CD4-positive, alpha-beta T cell (primary cell): ENCODE measurements at regions of chr14 and their contacts with region 1.

Region 1: DNA sequence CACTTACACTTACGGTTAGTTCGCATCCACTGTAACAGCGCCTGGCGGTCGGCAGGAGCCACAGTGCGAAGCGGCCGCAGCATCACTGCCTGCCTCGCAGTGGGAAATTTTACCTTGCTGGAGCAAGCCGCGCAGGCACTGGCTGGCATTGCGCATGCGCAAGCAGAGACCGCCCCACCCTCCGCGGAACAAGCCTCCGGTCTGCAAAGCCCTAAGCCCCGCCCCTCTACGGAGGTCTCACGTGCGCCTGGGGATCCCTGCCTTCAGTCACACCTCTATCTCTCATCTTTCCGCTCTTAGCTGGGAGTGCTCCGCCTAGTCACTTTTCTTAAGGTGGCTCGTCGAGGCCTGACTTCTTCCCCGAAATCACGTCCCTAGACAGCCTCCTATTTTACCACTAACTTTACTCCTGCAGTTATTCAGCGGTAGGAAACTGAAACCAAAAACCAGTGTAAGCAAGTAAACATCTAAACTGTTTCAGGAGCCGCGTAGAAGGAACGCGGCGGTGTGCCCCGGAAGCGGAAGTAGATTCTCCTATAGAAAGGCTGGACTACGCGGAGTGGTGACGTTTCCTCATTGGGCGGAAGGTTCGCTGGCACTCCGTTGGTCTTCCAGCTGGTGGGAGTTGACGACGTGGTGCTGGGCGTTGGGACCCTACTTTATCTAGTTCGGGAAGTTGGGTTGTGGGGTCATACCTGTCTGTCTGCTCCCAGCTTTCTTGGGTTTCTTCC is at the start of gene SRP54:
- DNase-seq: peak; percentile 98 to 100 (median 100)
- ATAC-seq: peak; percentile 93
- H3K4me3 ChIP-seq: peak within 1 kb of the TSS; percentile 81
- H3K4me3 Mint-ChIP-seq: no peak within 1 kb of the TSS
- H3K27ac ChIP-seq: peak within 1 kb of the TSS; percentile 96 to 99
- H3K27ac Mint-ChIP-seq: no peak within 1 kb of the TSS
- H3K4me1 ChIP-seq: peaks cover 38% of the 10 kb centered on the region
- H3K4me1 Mint-ChIP-seq: peaks cover 14% of the 10 kb centered on the region
- H3K27me3 ChIP-seq: no peaks in the 10 kb centered on the region
- H3K27me3 Mint-ChIP-seq: no peaks in the 10 kb centered on the region
- CTCF ChIP-seq: no peak
- total RNA-seq, gene SRP54: 30.3 to 32.7 TPM

Region 2: DNA sequence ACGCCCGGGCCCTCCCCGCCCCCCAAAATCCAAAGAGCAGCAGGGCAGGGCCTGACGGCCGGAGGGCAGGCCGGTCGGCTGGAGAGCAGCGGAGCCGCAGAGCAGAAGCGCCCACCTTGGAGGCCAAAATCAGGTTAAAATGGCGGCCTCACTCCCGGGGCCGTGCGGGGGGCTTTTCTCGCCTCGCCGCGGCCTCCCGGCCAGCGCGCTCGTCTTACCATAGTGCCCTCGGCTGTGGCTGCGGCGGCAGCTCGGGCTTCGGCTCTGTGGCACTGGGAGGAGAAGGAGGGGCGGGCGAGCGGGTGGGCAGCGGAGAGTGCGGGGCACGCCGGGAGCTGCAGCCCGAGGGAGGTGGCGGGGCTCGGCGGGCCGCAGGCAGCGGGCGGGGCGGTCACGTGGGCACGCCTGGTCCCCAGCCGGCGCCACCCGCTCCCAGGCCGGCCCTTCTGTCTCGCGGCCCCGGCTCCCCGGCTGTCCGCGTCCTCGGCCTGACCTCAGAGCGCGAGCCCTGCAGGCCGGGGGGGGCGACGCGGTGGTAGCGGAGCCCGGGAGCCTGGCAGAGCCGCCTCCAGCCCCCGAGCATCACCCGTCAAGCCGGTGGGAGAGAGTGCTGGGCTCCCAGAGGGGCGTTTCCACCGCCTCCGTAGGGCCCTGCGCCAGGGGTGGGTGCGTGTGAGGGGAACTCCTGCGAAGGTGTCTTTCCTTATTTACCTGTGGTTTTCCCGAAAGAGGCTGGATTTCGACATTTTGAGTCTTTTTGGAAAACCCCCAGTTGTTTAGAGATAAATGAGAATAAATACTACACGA is 268.1 kb before region 1 on chr14 and contains the start of gene CFL2:
- CTCF ChIA-PET with region 1: no interaction called
- POLR2A ChIA-PET with region 1: interaction called, 4 read pairs
- intact Hi-C with region 1: loop called in 1 of 2 experiments (anchors 5 kb)
- DNase-seq: peak; percentile 34 to 92 (median 61)
- ATAC-seq: peak; percentile 87
- H3K4me3 ChIP-seq: peak within 1 kb of the TSS; percentile 78
- H3K4me3 Mint-ChIP-seq: peak within 1 kb of the TSS; percentile 94
- H3K27ac ChIP-seq: peak within 1 kb of the TSS; percentile 31 to 52
- H3K27ac Mint-ChIP-seq: peak within 1 kb of the TSS; percentile 90
- H3K4me1 ChIP-seq: peaks cover 9% of the 10 kb centered on the region
- H3K4me1 Mint-ChIP-seq: peaks cover 31% of the 10 kb centered on the region
- H3K27me3 ChIP-seq: no peaks in the 10 kb centered on the region
- H3K27me3 Mint-ChIP-seq: no peaks in the 10 kb centered on the region
- CTCF ChIP-seq: no peak
- total RNA-seq, gene CFL2: 36.4 to 37.9 TPM

Region 3: GRCh38 chr14:34875031-34875922 is 107.3 kb before region 1 on chr14 and contains the start of gene BAZ1A:
- CTCF ChIA-PET with region 1: interaction called, 7 read pairs
- POLR2A ChIA-PET with region 1: interaction called, 172 read pairs
- intact Hi-C with region 1: loop called (anchors 1 to 2 kb)
- DNase-seq: peak; percentile 1 to 82 (median 18)
- ATAC-seq: peak; percentile 9
- H3K4me3 ChIP-seq: peak within 1 kb of the TSS; percentile 96
- H3K4me3 Mint-ChIP-seq: peak within 1 kb of the TSS; percentile 100
- H3K27ac ChIP-seq: peak within 1 kb of the TSS; percentile 100
- H3K27ac Mint-ChIP-seq: peak within 1 kb of the TSS; percentile 97
- H3K4me1 ChIP-seq: peaks cover 19% of the 10 kb centered on the region
- H3K4me1 Mint-ChIP-seq: peaks cover 40% of the 10 kb centered on the region
- H3K27me3 ChIP-seq: no peaks in the 10 kb centered on the region
- H3K27me3 Mint-ChIP-seq: no peaks in the 10 kb centered on the region
- CTCF ChIP-seq: no peak
- total RNA-seq, gene BAZ1A: 46.5 to 52.3 TPM

Region 4: GRCh38 chr14:34971381-34971780 is 11.2 kb before region 1 on chr14:
- CTCF ChIA-PET with region 1: interaction called, 3 read pairs
- POLR2A ChIA-PET with region 1: interaction called, 10 read pairs
- intact Hi-C with region 1: no loop called
- DNase-seq: no peak
- ATAC-seq: no peak
- H3K4me3 ChIP-seq: no peak overlapping the region
- H3K4me3 Mint-ChIP-seq: no peak overlapping the region
- H3K27ac ChIP-seq: no peak overlapping the region
- H3K27ac Mint-ChIP-seq: no peak overlapping the region
- H3K4me1 ChIP-seq: peaks cover 4% of the 10 kb centered on the region
- H3K4me1 Mint-ChIP-seq: peaks cover 20% of the 10 kb centered on the region
- H3K27me3 ChIP-seq: no peaks in the 10 kb centered on the region
- H3K27me3 Mint-ChIP-seq: no peaks in the 10 kb centered on the region
- CTCF ChIP-seq: no peak

Region 5: DNA sequence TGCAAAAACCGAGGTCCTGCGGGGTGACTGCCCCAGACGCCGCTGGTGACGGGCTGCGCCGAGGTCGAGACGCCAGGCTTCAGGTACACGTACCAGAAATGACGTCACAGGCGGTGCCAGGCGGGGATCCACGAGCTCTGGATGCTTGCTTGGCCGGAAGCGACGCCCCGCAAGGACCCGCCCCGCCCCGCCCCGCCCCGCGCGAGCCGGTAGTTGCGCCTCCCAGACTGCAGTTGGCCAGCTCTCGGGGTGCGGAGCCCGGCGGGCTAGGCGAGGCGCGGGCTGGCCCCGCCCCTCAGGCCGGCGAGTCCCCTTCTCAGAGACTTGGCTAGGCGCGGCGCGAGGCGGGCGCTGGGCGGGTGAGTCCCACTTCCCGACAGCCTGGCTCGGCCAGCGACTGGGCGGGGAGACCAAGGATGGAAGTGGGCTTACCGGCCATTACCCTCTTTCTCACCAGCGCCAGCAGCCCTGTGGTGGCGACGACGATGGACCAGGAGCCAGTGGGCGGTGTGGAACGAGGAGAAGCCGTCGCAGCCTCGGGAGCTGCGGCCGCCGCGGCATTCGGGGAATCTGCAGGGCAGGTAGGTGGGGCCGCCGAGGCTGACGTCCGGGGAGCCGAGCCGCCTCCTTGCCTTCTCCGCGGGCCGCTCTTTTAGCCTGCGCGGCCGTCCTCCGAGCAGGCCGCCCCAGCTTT is 63.6 kb after region 1 on chr14 and contains the start of gene FAM177A1:
- CTCF ChIA-PET with region 1: interaction called, 8 read pairs
- POLR2A ChIA-PET with region 1: interaction called, 131 read pairs
- intact Hi-C with region 1: loop called (anchors 1 kb)
- DNase-seq: peak; percentile 94 to 100 (median 98)
- ATAC-seq: peak; percentile 83
- H3K4me3 ChIP-seq: peak within 1 kb of the TSS; percentile 68
- H3K4me3 Mint-ChIP-seq: peak within 1 kb of the TSS; percentile 91
- H3K27ac ChIP-seq: peak within 1 kb of the TSS; percentile 96 to 97
- H3K27ac Mint-ChIP-seq: peak within 1 kb of the TSS; percentile 94
- H3K4me1 ChIP-seq: peaks cover 11% of the 10 kb centered on the region
- H3K4me1 Mint-ChIP-seq: peaks cover 36% of the 10 kb centered on the region
- H3K27me3 ChIP-seq: no peaks in the 10 kb centered on the region
- H3K27me3 Mint-ChIP-seq: no peaks in the 10 kb centered on the region
- CTCF ChIP-seq: no peak
- total RNA-seq, gene FAM177A1: 172 to 186 TPM

Region 6: DNA sequence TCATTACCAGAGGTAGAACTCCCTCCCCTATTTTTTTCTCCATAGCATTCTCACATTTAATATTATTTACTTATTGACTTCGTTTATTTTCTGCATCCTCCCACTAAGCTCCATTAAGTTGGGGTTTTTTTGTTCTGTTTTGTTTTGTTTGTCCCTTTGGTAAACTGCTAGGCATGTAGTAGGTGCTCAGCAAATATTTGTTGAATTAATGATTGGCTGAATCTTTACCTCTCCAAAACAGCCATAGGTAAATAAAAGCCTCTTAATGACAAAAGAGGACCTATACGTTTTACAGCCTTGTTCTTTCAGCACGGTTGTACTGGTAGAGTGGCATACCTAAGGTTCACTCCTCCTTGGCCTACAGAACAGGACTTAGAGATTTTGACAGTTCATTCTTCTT is 191.8 kb after region 1 on chr14:
- CTCF ChIA-PET with region 1: no interaction called
- POLR2A ChIA-PET with region 1: no interaction called
- intact Hi-C with region 1: no loop called
- DNase-seq: no peak
- ATAC-seq: no peak
- H3K4me3 ChIP-seq: no peak overlapping the region
- H3K4me3 Mint-ChIP-seq: no peak overlapping the region
- H3K27ac ChIP-seq: no peak overlapping the region
- H3K27ac Mint-ChIP-seq: no peak overlapping the region
- H3K4me1 ChIP-seq: no peaks in the 10 kb centered on the region
- H3K4me1 Mint-ChIP-seq: peaks cover 18% of the 10 kb centered on the region
- H3K27me3 ChIP-seq: no peaks in the 10 kb centered on the region
- H3K27me3 Mint-ChIP-seq: no peaks in the 10 kb centered on the region
- CTCF ChIP-seq: no peak

Region 7: GRCh38 chr14:35292051-35292769 is 309.6 kb after region 1 on chr14 and contains the start of gene PSMA6:
- CTCF ChIA-PET with region 1: no interaction called
- POLR2A ChIA-PET with region 1: interaction called, 17 read pairs
- intact Hi-C with region 1: loop called in 1 of 2 experiments (anchors 2 kb)
- DNase-seq: peak; percentile 97 to 100 (median 99)
- ATAC-seq: peak; percentile 96
- H3K4me3 ChIP-seq: peak within 1 kb of the TSS; percentile 78
- H3K4me3 Mint-ChIP-seq: peak within 1 kb of the TSS; percentile 98
- H3K27ac ChIP-seq: peak within 1 kb of the TSS; percentile 80 to 86
- H3K27ac Mint-ChIP-seq: peak within 1 kb of the TSS; percentile 95
- H3K4me1 ChIP-seq: peaks cover 38% of the 10 kb centered on the region
- H3K4me1 Mint-ChIP-seq: peaks cover 50% of the 10 kb centered on the region
- H3K27me3 ChIP-seq: no peaks in the 10 kb centered on the region
- H3K27me3 Mint-ChIP-seq: no peaks in the 10 kb centered on the region
- CTCF ChIP-seq: no peak
- total RNA-seq, gene PSMA6: 80.8 TPM

Region 8: DNA sequence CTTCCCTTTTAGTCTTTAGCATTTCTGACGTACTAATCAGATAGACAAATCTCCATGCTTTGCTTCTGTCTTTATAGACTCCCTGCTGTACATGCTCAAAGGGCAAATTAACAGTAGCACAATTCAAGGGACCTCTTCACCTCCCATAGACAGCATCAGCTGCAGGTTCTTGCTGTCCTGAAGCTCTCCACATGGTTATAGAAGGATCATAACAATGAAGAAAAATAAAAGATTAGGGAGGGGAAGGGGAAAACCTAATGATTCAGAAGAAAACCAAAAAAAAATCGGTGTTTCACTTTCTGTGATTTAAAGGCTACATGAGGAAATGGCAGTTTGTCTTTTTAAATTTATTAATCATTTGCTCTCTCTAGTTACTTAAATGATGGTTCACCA is 1038.4 kb after region 1 on chr14:
- CTCF ChIA-PET with region 1: no interaction called
- POLR2A ChIA-PET with region 1: no interaction called
- intact Hi-C with region 1: no loop called
- DNase-seq: no peak
- ATAC-seq: no peak
- H3K4me3 ChIP-seq: no peak overlapping the region
- H3K4me3 Mint-ChIP-seq: no peak overlapping the region
- H3K27ac ChIP-seq: no peak overlapping the region
- H3K27ac Mint-ChIP-seq: no peak overlapping the region
- H3K4me1 ChIP-seq: no peaks in the 10 kb centered on the region
- H3K4me1 Mint-ChIP-seq: no peaks in the 10 kb centered on the region
- H3K27me3 ChIP-seq: no peaks in the 10 kb centered on the region
- H3K27me3 Mint-ChIP-seq: no peaks in the 10 kb centered on the region
- CTCF ChIP-seq: no peak